Activated CD4-positive, alpha-beta T cell treated with anti-CD3 and anti-CD28 coated beads for 36 hours (primary cell): ENCODE measurements at regions of chr10 and their contacts with region 1.

Region 1: DNA sequence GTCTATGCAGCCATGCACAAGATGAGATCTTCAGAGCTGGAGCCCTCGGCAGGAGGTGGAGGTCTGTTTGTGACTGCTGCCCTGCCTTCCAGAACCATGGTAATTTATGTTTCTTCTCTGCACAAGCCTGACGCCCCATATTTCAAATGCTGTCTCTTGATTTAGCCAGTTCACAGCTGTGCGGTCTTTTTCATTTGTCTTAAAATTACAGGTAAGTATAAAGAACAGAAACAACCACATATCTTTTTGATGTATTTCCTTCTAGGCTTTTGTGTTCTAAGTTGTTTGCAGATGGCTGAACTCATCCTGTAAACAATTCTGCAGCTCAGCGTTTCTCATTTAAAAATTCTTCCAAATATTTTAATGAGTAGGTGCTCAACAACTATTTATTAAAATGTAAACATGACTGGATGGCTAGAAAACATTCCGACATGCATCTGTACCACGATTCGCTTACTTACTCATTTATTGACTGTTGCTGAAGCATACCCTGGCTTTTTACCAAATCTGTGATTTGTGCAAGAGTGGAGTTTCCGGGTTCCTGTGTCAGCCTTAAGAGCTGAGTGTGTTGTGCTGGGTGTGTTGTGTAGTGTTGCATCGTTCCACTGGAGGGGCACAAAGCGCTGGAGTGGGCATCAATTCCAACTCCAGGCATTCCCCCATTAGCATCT is 58.9 kb downstream of the PIP4K2A start:
- DNase-seq: peak; percentile 62
- ATAC-seq: peak; percentile 57
- H3K4me3 Mint-ChIP-seq: peak overlapping the region; percentile 63
- H3K27ac Mint-ChIP-seq: peak overlapping the region; percentile 85
- H3K4me1 Mint-ChIP-seq: peaks cover 98% of the 10 kb centered on the region
- H3K27me3 Mint-ChIP-seq: no peaks in the 10 kb centered on the region

Region 2: GRCh38 chr10:22666287-22667092 is 11.0 kb after region 1 on chr10:
- CTCF ChIA-PET with region 1: interaction called, 9 read pairs
- POLR2A ChIA-PET with region 1: interaction called, 3 read pairs
- intact Hi-C with region 1: loop called (anchors 1 kb)
- DNase-seq: peak; percentile 68
- ATAC-seq: peak; percentile 77
- H3K4me3 Mint-ChIP-seq: peak overlapping the region; percentile 72
- H3K27ac Mint-ChIP-seq: peak overlapping the region; percentile 94
- H3K4me1 Mint-ChIP-seq: peaks cover 80% of the 10 kb centered on the region
- H3K27me3 Mint-ChIP-seq: no peaks in the 10 kb centered on the region

Region 3: GRCh38 chr10:22676435-22676834 is 21.0 kb after region 1 on chr10:
- CTCF ChIA-PET with region 1: interaction called, 14 read pairs
- POLR2A ChIA-PET with region 1: interaction called, 5 read pairs
- intact Hi-C with region 1: no loop called
- DNase-seq: no peak
- ATAC-seq: peak; percentile 44
- H3K4me3 Mint-ChIP-seq: no peak overlapping the region
- H3K27ac Mint-ChIP-seq: peak overlapping the region; percentile 40
- H3K4me1 Mint-ChIP-seq: peaks cover 91% of the 10 kb centered on the region
- H3K27me3 Mint-ChIP-seq: no peaks in the 10 kb centered on the region

Region 4: DNA sequence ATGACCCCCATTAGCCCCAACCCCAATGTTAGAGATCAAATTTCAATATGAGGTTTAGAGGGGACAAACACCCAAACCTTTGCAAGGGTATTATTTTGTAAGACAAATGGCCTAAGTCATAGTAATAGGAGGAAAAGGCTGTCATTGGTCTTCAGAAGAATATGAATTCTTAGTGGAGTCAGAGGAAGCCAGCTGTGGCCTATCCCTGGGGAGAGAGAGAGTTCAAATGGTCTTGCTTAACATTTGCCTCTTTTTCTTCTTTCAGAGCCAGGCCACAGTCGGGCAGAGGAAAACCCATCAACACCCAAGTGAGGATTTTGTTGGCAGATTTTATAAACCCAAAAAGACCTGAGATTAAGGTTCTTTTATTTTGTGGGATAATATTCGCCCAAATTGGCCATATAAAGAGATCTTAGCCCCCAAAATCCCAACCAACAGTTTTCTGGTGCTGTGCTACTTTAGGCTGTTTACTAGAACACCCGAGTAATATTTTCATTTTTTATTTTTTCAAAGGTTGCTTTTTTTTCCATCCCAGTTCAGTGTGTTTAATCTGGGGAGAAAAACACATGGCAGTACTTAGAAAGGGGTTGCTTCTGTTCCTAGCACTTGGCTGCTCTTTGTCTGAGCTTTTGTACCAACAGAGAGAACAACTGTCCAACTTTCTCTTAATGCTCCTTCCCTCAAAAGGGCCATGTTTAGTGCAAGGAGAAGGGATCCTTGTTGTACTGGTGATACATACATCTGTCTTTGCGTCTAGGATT is 245.6 kb after region 1 on chr10:
- CTCF ChIA-PET with region 1: no interaction called
- POLR2A ChIA-PET with region 1: no interaction called
- intact Hi-C with region 1: no loop called
- DNase-seq: no peak
- ATAC-seq: no peak
- H3K4me3 Mint-ChIP-seq: no peak overlapping the region
- H3K27ac Mint-ChIP-seq: no peak overlapping the region
- H3K4me1 Mint-ChIP-seq: no peaks in the 10 kb centered on the region
- H3K27me3 Mint-ChIP-seq: no peaks in the 10 kb centered on the region

Region 5: GRCh38 chr10:23368816-23369640 is 713.6 kb after region 1 on chr10:
- CTCF ChIA-PET with region 1: no interaction called
- POLR2A ChIA-PET with region 1: no interaction called
- intact Hi-C with region 1: loop called in 1 of 2 experiments (anchors 10 kb)
- DNase-seq: no peak
- ATAC-seq: peak; percentile 43
- H3K4me3 Mint-ChIP-seq: peak overlapping the region; percentile 3
- H3K27ac Mint-ChIP-seq: peak overlapping the region; percentile 58
- H3K4me1 Mint-ChIP-seq: peaks cover 59% of the 10 kb centered on the region
- H3K27me3 Mint-ChIP-seq: no peaks in the 10 kb centered on the region